ENCODE measurements at regions of chrX and their contacts with region 1.

Region 1: GRCh38 chrX:134764212-134764785 is 106.0 kb upstream of the PLAC1 start:
- DNase-seq: no peak
- H3K4me3 Mint-ChIP-seq: no peak overlapping the region
- H3K27ac Mint-ChIP-seq: no peak overlapping the region
- H3K4me1 Mint-ChIP-seq: peaks cover 7% of the 10 kb centered on the region
- H3K27me3 Mint-ChIP-seq: no peaks in the 10 kb centered on the region

Region 2: DNA sequence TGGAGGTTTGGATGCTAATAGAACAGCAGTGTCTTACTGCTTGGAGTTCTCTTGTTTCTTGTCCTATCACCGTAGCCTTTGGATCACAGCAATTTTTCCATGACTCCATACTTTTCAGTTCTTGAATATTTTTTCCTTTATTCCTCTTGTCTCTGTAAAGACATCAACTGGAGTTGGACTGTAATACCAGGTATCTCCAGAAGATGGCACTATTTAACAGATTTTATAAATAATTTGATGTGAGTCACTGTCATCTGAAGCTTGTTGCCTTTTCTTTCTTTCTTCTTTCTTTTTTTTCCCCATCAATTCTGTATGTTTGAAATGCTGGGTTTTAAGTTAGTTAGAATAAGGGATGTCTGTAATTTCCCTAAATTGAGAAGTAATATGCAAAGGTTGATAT is 280.3 kb before region 1 on chrX:
- intact Hi-C with region 1: loop called (anchors 5 kb)
- DNase-seq: no peak
- H3K4me3 Mint-ChIP-seq: no peak overlapping the region
- H3K27ac Mint-ChIP-seq: no peak overlapping the region
- H3K4me1 Mint-ChIP-seq: no peaks in the 10 kb centered on the region
- H3K27me3 Mint-ChIP-seq: no peaks in the 10 kb centered on the region

Region 3: GRCh38 chrX:134520860-134521390 is 243.4 kb before region 1 on chrX:
- intact Hi-C with region 1: loop called (anchors 2 kb)
- DNase-seq: no peak
- H3K4me3 Mint-ChIP-seq: no peak overlapping the region
- H3K27ac Mint-ChIP-seq: no peak overlapping the region
- H3K4me1 Mint-ChIP-seq: peaks cover 10% of the 10 kb centered on the region
- H3K27me3 Mint-ChIP-seq: no peaks in the 10 kb centered on the region

Region 4: DNA sequence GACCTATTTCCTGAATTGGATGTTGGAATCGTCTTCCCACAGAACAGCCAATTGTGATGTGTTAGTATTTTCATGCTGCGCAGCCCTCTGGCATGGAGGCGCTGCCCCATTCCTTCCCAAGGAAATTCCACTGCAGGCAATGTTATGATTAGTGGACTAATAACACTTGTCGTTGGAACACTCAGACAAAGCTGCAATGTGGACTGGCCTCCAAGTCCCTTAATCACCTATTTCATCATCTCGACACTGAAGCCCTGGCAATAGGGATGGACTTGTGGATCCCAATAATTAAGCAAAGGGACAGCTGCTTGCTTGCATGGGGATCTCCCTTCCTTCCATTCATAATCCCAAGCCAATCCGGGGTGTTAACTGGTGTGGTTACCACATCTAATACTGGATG is 27.2 kb before region 1 on chrX:
- intact Hi-C with region 1: no loop called
- DNase-seq: no peak
- H3K4me3 Mint-ChIP-seq: no peak overlapping the region
- H3K27ac Mint-ChIP-seq: no peak overlapping the region
- H3K4me1 Mint-ChIP-seq: no peaks in the 10 kb centered on the region
- H3K27me3 Mint-ChIP-seq: peaks cover 5% of the 10 kb centered on the region

Measured in activated T-helper 2 cell treated with anti-CD3 and anti-CD28 coated beads, Interferon-gamma antibody, Interleukin-2, Interleukin-4, amounts not matched to agents 10 μg/mL and 5 μg/mL and 100 μg/mL, durations not matched to agents 14 hours and 24 hours and 36 hours (primary cell).